ENCODE measurements at regions of chr5 and their contacts with region 1.

Region 1: GRCh38 chr5:116652196-116652729 is 77.6 kb upstream of the SEMA6A start:
- DNase-seq: peak; percentile 30
- CTCF ChIP-seq: no peak

Region 2: DNA sequence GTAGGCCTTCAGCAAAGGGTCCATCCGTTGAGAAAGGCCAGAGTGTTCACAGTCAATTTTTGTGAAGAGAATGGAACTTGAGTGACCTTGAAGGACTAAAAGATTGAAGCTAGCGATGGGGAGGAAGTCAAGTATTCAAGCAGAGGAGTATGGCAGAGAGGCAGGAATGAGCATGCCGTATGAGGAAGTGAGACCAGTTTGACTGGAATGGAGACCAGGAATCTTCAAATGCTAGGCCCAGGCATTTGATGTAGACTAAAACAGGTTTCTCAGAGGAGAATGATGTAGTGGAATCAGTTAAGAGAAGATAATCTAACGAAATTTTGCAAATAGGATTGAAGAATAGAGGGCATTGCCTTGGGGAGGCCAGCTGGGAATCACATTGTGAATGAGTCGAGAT is 12.7 kb after region 1 on chr5:
- CTCF ChIA-PET with region 1: interaction called, 17 read pairs
- POLR2A ChIA-PET with region 1: no interaction called
- DNase-seq: no peak
- CTCF ChIP-seq: no peak

Region 3: GRCh38 chr5:116686438-116686837 is 34.2 kb after region 1 on chr5:
- CTCF ChIA-PET with region 1: no interaction called
- POLR2A ChIA-PET with region 1: no interaction called
- DNase-seq: no peak
- CTCF ChIP-seq: no peak